AG04449 (cell line): ENCODE measurements at regions of chr7 and their contacts with region 1.

Region 1: DNA sequence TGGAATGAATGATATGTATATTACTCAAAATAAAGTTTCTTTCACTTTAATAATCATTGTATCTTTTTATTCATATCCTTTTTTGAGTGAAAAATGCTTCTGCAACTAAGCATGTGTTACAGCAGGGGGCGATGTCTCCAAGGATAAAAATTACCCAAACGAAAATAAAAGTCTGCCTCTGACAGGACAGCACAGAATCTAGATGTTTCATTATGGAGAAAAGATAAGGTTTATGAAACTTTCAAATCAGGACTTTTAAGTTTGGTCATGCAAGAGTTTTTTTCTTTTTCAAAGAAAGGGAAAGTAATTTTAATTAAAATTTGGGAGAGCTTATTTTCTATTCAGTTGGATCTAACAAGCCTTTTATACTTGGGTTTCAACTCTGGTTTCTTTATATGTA is 48.4 kb downstream of the TES start:
- DNase-seq: no peak
- H3K4me3 ChIP-seq: no peak overlapping the region
- CTCF ChIP-seq: peak; percentile 31

Region 2: DNA sequence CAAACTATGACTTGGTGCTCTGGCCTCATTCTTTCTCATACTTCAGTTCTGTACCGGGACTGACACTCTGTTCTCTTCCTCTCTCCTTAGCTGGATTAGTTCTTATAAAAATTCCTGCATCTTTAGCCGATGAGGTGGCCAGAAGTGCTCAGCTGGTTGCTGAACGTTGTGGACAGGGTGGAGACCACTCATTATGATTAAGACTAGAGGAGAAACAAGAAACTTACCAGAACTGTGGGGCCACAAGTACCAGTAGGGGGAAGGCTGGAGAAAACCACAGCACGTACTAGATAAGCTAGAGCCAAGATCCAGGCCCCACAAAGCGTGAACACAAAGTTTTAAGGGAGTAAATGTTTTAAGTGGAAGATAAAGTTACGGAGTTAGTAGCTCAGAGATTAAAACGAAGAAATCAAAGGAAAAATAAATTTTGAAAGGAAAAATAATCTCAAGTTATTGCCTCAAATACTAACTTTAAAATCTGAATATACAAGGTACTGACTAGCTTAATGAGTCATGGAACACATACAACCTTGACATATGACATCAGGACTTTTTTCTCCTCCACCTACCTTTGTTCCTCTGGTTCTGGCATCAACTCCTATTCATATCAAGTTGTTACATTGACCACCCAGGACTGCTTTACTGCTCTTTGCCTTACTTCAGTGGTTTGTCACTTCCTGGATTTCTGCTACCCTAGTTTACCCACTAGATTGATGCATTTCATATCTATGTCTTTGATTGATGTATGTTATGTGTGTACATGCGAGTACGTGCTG is 697.2 kb before region 1 on chr7:
- CTCF ChIA-PET with region 1: no interaction called
- POLR2A ChIA-PET with region 1: no interaction called
- DNase-seq: peak; percentile 12
- H3K4me3 ChIP-seq: no peak overlapping the region
- CTCF ChIP-seq: no peak

Region 3: GRCh38 chr7:116173051-116174028 is 85.4 kb before region 1 on chr7:
- CTCF ChIA-PET with region 1: interaction called, 83 read pairs
- POLR2A ChIA-PET with region 1: interaction called, 6 read pairs
- DNase-seq: no peak
- H3K4me3 ChIP-seq: no peak overlapping the region
- CTCF ChIP-seq: no peak

Region 4: GRCh38 chr7:116206141-116206540 is 52.6 kb before region 1 on chr7:
- CTCF ChIA-PET with region 1: no interaction called
- POLR2A ChIA-PET with region 1: no interaction called
- DNase-seq: no peak
- H3K4me3 ChIP-seq: no peak overlapping the region
- CTCF ChIP-seq: no peak

Region 5: DNA sequence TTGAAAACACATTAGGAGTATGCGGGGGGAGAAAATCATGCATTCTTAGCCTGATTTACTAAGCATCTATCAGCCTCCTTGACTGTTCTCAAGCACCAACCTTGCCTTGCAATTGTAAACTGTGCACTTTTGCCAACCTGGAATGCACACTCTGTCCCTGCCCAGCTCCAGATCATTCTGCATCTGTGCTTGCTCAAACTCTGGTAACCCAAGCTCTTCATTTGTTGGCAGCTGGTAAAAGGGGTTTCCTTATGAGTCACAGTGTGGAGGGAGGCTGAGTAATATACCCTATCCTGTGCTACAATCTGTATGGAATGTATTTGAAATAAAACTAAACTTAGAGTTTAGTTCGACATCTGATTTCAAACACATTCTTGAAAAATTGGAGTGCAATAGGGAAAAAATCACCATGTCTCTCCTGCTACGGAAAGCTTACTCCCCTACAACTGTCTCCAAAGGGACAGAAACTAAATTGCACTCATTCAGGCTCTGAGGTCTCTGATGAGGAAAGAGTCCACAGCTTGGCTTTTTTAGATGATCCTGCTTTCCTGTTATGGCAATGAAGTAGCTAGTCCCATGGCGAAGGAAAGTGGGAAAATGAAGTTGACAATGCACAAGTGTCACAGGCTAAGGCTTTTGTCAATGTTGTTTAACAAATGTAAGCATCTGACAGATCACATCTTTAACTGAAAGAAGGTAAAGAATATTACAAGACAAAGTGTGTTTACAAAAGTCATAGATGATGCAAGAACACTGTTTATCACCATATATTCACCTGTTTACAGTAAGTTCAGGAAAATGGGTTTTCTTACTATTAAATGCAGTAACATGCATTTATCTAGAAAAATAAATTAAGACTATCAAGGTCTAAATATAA is 13.5 kb after region 1 on chr7:
- CTCF ChIA-PET with region 1: interaction called, 12 read pairs
- POLR2A ChIA-PET with region 1: interaction called, 12 read pairs
- DNase-seq: peak; percentile 85
- H3K4me3 ChIP-seq: peak overlapping the region; percentile 21
- CTCF ChIP-seq: no peak

Region 6: DNA sequence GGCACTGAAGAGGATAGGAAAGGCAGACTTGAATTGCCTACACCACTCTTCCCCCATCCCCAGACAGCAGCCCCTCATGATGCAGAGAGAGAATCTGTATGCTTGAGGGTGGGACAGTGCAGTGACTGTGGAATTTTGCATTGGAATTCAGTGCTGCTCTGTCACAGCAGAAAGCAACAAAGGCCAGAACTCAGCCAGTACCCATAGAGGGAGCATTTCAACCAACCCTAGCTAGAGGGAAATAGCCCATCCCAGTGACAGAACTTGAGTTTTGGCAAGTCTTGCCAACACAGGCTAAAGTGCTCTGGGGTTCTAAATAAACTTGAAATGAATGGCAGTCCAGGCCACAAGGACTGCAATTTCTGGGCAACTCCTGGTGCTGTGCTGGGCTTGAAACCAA is 32.0 kb after region 1 on chr7:
- CTCF ChIA-PET with region 1: no interaction called
- POLR2A ChIA-PET with region 1: no interaction called
- DNase-seq: no peak
- H3K4me3 ChIP-seq: no peak overlapping the region
- CTCF ChIP-seq: no peak

Region 7: DNA sequence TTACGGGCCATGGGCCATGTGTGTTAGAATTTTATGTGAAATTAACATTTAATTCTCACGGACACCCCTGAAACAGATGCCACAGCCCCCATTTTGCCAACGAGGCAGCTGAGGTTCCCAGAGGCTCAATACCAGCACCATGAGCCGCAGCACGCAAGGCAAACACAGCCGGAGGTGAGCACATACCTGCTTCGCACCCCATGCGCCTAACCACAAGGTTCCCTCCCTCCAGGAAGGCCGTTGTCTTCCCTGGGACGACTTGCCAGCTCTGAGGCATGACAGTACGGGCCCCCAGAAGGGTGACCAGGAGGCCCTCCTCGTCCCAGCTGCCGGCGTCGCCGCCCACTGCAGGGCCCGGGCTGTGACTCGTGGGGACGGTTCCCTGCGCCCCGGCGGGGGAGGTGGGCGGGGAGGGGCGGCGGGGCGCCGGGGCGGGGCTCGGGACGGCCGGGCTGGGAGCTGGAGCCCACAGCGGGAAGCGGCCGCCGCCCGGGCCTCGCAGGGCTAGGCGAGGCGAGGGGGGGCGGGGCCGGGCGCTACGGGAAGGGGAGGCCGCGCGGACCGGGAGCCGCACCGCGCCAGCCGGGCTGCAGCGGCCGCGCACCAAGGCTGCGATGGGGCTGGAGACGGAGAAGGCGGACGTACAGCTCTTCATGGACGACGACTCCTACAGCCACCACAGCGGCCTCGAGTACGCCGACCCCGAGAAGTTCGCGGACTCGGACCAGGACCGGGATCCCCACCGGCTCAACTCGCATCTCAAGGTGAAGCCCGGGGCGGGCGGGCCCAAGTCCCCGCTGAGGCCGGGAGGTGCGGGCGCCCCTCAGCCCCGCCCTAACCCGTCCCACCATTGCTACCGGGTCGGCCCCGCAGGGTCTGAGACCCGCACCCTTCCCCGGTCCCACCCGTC is 240.7 kb after region 1 on chr7 and contains the start of gene CAV2:
- CTCF ChIA-PET with region 1: interaction called, 16 read pairs
- POLR2A ChIA-PET with region 1: interaction called, 5 read pairs
- DNase-seq: no peak
- H3K4me3 ChIP-seq: peak within 1 kb of the TSS; percentile 67
- CTCF ChIP-seq: no peak

Region 8: DNA sequence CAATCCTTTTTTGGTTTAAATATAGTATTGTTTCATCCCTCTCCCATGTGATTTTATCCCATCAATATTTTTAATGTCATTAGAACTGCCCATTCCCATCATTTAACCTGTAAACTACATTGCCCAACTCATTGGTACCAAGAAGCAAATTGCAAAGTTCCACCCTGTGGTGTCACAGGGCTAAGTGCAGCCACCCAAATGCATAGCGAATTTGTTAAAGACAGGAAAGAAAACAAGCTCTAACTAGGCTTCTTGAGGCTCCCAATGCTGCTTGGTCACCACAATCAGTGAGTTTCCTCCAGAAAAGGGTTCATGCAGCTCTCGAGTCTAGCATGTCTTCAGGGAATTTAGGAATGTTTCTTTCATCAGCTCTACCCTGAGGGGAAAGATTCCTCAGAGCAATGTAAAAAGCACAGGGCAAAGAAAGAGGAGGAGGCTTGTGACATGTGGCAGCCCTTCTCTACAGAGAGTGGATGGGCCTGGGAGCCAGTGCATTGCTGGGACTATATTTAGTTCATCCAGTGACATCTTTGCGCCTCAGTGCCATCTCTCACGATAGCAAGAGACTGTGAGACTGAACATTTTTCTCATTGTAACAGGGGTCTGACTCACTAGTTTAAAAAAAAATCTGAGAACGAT is 324.2 kb after region 1 on chr7:
- CTCF ChIA-PET with region 1: interaction called, 74 read pairs
- POLR2A ChIA-PET with region 1: interaction called, 4 read pairs
- DNase-seq: peak; percentile 91
- H3K4me3 ChIP-seq: no peak overlapping the region
- CTCF ChIP-seq: no peak